Ascending aorta (tissue), 2 donors: ENCODE measurements at regions of chr2 and their contacts with region 1.

Region 1: DNA sequence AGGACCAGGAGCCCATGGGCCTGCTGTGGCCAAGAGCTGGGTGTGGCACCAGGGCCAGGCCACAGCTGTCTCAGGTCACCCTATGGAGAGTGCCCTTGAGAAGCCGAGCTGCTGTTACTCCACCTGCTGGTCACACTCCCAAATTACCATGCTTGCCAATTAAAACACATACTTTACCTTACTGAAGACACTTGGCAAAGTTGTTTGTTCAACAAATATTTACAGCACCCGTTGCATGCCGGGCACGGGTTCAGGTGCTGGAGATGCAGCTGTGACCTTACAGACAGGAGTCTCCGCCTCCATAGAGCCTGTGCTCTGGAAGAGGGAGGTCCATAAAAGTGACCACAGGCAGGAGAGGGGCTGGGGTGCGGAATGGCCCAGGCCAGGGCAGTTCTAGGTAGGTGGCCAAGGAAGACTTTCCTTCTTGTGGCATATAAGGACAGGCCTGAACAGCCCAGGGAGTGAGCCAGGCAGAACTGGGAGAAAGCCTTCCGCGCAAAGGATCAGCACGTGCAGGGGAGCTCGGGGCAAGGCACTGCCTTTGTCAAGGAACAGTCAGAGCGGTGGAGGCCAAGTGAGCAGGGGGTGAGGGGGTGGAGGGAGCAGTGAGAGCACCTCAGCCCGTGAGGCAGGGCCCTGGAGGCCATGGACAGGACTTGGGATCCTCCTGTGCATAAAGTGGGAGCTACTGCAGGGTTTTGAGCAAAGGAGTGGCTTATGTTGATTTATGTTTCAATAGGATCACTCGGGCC is 23.6 kb upstream of the RBM44 start:
- DNase-seq: no peak
- H3K4me3 ChIP-seq: no peak overlapping the region
- H3K27ac ChIP-seq: peak overlapping the region in 1 of 2 donors; percentile 80
- H3K4me1 ChIP-seq: peaks cover 0 to 15% of the 10 kb centered on the region in 2 donors
- H3K27me3 ChIP-seq: no peaks in the 10 kb centered on the region
- CTCF ChIP-seq: peak; percentile 15 to 49 (median 33)

Region 2: GRCh38 chr2:237101118-237101979 is 673.6 kb before region 1 on chr2:
- intact Hi-C with region 1: no loop called
- DNase-seq: no peak
- H3K4me3 ChIP-seq: no peak overlapping the region
- H3K27ac ChIP-seq: no peak overlapping the region
- H3K4me1 ChIP-seq: no peaks in the 10 kb centered on the region
- H3K27me3 ChIP-seq: no peaks in the 10 kb centered on the region
- CTCF ChIP-seq: no peak

Region 3: DNA sequence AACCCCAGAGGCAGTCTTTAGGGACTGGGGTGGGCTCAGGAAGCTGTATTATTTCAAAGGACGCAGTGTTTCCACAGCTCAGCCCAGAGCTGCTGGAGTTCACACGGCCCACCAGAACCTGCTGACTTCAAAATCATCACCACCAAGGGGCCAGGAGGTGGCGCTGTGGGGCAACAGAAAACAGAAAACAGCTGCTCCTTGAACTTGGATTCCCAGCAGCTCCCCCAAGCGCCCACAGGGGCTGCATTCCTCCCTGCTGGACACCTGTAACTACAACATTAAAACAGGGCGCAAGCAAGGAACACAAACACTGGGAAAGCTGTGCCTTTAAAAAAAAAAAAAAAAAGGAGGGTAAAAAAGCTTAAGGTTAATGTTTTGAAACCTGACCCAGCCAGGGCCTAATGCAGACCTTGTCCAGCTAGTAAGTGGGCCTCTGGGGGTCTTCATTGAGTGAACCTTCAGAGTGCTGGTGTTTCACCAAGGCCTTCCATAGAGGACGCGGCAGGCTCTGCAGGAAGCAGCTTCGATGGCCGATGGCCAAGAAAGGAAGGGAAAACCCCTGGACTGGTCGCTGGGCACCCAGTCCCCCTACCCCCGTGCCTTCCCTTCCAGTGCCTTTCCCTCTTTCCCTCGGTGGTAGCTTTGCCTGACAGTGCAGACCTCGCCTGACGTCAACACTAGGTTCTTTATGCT is 262.1 kb before region 1 on chr2:
- intact Hi-C with region 1: loop called (anchors 10 kb)
- DNase-seq: peak; percentile 25 to 91
- H3K4me3 ChIP-seq: no peak overlapping the region
- H3K27ac ChIP-seq: no peak overlapping the region
- H3K4me1 ChIP-seq: no peaks in the 10 kb centered on the region
- H3K27me3 ChIP-seq: no peaks in the 10 kb centered on the region
- CTCF ChIP-seq: peak; percentile 77 to 93 (median 92)